ENCODE measurements at regions of chr5 and their contacts with region 1.

Region 1: GRCh38 chr5:178153573-178154343 is at the start of gene NHP2:
- ATAC-seq: peak; percentile 89 to 98 (median 96)
- H3K4me3 ChIP-seq: peak within 1 kb of the TSS; percentile 57 to 86 (median 75)
- H3K27ac ChIP-seq: peak within 1 kb of the TSS; percentile 59 to 85
- H3K4me1 ChIP-seq: peaks cover 6 to 7% of the 10 kb centered on the region in 2 donors
- total RNA-seq, gene NHP2: 135 to 290 (median 207) TPM

Region 2: GRCh38 chr5:177336112-177336511 is 817.6 kb before region 1 on chr5:
- in situ Hi-C with region 1: no loop called
- ATAC-seq: peak in 2 of 8 experiments; percentile 13 to 82
- H3K4me3 ChIP-seq: no peak overlapping the region
- H3K27ac ChIP-seq: no peak overlapping the region
- H3K4me1 ChIP-seq: no peaks in the 10 kb centered on the region

Region 3: GRCh38 chr5:177599731-177600507 is 553.8 kb before region 1 on chr5 and contains the start of gene B4GALT7:
- in situ Hi-C with region 1: loop called in 1 of 9 experiments (anchors 25 kb)
- ATAC-seq: peak; percentile 88 to 95 (median 90)
- H3K4me3 ChIP-seq: peak within 1 kb of the TSS; percentile 83 to 97 (median 95)
- H3K27ac ChIP-seq: peak within 1 kb of the TSS; percentile 89 to 91
- H3K4me1 ChIP-seq: peaks cover 7 to 10% of the 10 kb centered on the region in 2 donors
- total RNA-seq, gene B4GALT7: 19.6 to 37.5 (median 25.4) TPM

Region 4: DNA sequence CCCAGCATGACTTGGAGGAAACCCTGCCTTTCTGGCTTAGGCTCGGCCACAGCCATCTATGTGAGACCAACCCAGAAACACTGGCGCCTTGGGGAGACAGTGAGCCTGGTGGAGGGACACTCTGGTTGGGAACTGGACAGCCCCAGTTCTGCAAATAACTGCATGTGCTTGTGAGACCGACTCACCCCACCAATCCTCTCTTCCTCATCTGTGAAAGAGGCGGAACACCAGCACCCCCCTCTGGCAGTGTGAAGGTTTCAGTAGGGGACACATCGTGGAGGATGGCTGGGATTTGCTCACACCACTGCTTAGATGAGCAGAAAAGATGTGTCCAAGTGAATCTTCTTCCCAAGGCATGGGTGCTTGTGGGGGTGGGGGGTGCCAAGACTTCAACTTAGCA is 83.8 kb before region 1 on chr5:
- in situ Hi-C with region 1: loop called in 5 of 9 experiments (anchors 10 to 25 kb)
- ATAC-seq: peak in 3 of 8 experiments; percentile 10 to 38 (median 25)
- H3K4me3 ChIP-seq: no peak overlapping the region
- H3K27ac ChIP-seq: no peak overlapping the region
- H3K4me1 ChIP-seq: no peaks in the 10 kb centered on the region

Region 5: GRCh38 chr5:178075840-178076548 is 77.8 kb before region 1 on chr5:
- in situ Hi-C with region 1: loop called in 5 of 9 experiments (anchors 10 to 25 kb)
- ATAC-seq: peak; percentile 78 to 94 (median 90)
- H3K4me3 ChIP-seq: peak overlapping the region in 2 of 5 donors; percentile 10 to 12
- H3K27ac ChIP-seq: no peak overlapping the region
- H3K4me1 ChIP-seq: peaks cover 0 to 4% of the 10 kb centered on the region in 2 donors

Region 6: GRCh38 chr5:178869577-178869976 is 715.8 kb after region 1 on chr5:
- in situ Hi-C with region 1: no loop called
- ATAC-seq: no peak
- H3K4me3 ChIP-seq: no peak overlapping the region
- H3K27ac ChIP-seq: no peak overlapping the region
- H3K4me1 ChIP-seq: no peaks in the 10 kb centered on the region